Activated CD8-positive, alpha-beta T cell treated with anti-CD3 and anti-CD28 coated beads, Interleukin-2, amount 10 ng/mL, durations not matched to agents 7 days and 5 days (primary cell): ENCODE measurements at regions of chr16 and their contacts with region 1.

Region 1: GRCh38 chr16:21708533-21709115 is 44.9 kb downstream of the OTOA start:
- DNase-seq: peak; percentile 92
- ATAC-seq: peak; percentile 82
- H3K4me3 Mint-ChIP-seq: no peak overlapping the region
- H3K27ac Mint-ChIP-seq: no peak overlapping the region
- H3K4me1 Mint-ChIP-seq: peaks cover 3% of the 10 kb centered on the region
- H3K27me3 Mint-ChIP-seq: no peaks in the 10 kb centered on the region

Region 2: GRCh38 chr16:21673469-21673868 is 35.2 kb before region 1 on chr16:
- CTCF ChIA-PET with region 1: no interaction called
- POLR2A ChIA-PET with region 1: no interaction called
- DNase-seq: no peak
- ATAC-seq: no peak
- H3K4me3 Mint-ChIP-seq: no peak overlapping the region
- H3K27ac Mint-ChIP-seq: no peak overlapping the region
- H3K4me1 Mint-ChIP-seq: no peaks in the 10 kb centered on the region
- H3K27me3 Mint-ChIP-seq: peaks cover 16% of the 10 kb centered on the region

Region 3: GRCh38 chr16:21698169-21699032 is 10.2 kb before region 1 on chr16:
- CTCF ChIA-PET with region 1: interaction called, 12 read pairs
- POLR2A ChIA-PET with region 1: no interaction called
- DNase-seq: no peak
- ATAC-seq: no peak
- H3K4me3 Mint-ChIP-seq: no peak overlapping the region
- H3K27ac Mint-ChIP-seq: no peak overlapping the region
- H3K4me1 Mint-ChIP-seq: peaks cover 2% of the 10 kb centered on the region
- H3K27me3 Mint-ChIP-seq: peaks cover 6% of the 10 kb centered on the region

Region 4: DNA sequence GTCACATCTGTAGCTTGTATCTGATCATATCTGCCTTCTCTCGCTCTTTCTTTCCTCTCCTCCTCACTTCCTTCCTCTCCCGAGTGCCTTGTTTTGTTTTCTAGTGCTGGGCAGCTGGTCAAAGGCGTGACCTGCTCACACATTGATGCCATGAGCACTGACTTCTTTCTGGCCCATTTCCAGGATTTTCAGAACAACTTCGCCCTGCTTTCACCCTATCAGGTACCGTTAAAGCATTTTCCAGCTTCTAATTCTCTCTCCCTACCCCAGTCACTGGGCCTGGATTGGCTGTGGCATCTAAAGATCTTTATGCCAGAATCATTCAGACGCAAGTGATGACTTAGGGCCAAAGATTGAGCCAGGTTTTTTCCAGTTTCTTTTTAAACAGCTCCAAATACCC is 10.7 kb after region 1 on chr16:
- CTCF ChIA-PET with region 1: interaction called, 19 read pairs
- POLR2A ChIA-PET with region 1: no interaction called
- DNase-seq: no peak
- ATAC-seq: no peak
- H3K4me3 Mint-ChIP-seq: no peak overlapping the region
- H3K27ac Mint-ChIP-seq: no peak overlapping the region
- H3K4me1 Mint-ChIP-seq: peaks cover 1% of the 10 kb centered on the region
- H3K27me3 Mint-ChIP-seq: peaks cover 2% of the 10 kb centered on the region

Region 5: GRCh38 chr16:21950782-21951521 is 242.3 kb after region 1 on chr16:
- CTCF ChIA-PET with region 1: no interaction called
- POLR2A ChIA-PET with region 1: no interaction called
- DNase-seq: peak; percentile 40
- ATAC-seq: no peak
- H3K4me3 Mint-ChIP-seq: peak overlapping the region; percentile 37
- H3K27ac Mint-ChIP-seq: peak overlapping the region; percentile 58
- H3K4me1 Mint-ChIP-seq: peaks cover 41% of the 10 kb centered on the region
- H3K27me3 Mint-ChIP-seq: no peaks in the 10 kb centered on the region